Thyroid gland (tissue), 4 donors: ENCODE measurements at regions of chr14 and their contacts with region 1.

Region 1: DNA sequence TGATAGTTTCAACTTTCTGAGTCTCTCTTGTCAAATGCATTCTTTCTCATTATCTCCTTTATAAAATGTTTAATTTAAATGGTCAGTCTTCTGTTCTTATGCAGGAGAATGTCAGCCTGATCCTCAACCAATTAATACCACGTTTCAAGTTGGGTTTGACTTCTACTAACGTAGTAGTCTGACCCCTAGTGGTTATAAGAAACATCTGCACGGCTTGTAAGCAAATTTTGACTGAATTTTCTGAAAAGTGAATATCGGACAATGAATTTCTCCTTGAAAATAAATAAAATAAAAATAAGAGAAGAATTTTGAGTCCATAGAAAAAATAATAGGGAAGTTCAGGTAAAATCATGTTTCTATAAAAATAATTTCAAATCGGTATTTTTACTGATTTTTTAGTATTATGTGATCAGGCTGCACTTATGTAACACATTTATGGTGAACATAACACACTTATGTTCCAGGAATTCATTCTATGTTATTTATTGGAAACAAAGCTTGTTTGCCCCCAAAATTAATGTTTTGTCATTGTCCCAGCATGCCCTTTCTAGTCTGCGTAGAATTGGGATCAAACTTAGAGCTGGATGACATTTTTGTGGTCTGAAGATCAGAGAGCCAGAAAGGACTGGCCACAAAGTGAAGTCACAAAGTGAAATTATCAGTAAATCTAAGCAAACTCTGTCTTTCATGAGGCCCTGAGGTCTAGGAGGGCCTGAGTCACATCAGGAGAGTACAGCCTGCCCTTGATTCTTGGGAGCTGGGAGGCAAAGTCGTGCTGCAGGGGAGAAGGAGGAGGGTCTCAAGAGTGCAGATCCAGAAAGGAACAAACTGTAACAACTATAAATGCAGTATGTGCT is 101.2 kb upstream of the STXBP6 start:
- DNase-seq: no peak
- H3K4me3 ChIP-seq: no peak overlapping the region
- H3K27ac ChIP-seq: no peak overlapping the region
- H3K4me1 ChIP-seq: no peaks in the 10 kb centered on the region
- H3K27me3 ChIP-seq: no peaks in the 10 kb centered on the region
- CTCF ChIP-seq: peak; percentile 47 to 85 (median 81)
- POLR2A ChIP-seq: no peak

Region 2: DNA sequence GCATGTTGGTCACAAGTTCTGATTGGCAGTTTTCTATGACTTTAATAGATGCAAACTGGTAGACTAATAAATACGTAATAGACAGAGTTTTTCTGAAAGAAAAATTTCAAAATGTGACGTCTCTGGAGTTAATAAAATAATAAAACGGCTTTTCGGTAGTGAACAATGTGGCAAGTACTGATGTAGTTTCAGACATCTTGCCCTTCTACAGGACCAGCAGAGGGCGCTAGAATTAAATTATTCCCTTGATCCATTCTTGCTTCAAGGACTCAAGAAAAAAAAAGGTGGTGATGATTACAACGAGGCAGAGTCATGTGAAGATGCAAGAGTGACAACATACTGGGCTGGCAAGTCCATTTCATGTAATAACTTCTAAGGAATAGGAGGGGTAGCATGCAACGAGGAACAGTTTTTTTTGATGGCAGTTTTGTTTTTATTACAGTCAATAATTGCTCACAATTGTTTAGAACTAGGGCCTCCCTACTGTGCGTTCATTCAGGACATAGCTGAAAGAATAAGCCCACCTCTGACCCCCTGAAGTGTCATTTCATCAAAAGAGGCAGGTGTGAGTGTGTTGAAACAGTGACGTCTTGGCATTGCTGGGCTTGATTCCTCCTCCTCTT is 416.2 kb before region 1 on chr14:
- intact Hi-C with region 1: loop called (anchors 5 kb)
- DNase-seq: peak; percentile 38 to 50
- H3K4me3 ChIP-seq: no peak overlapping the region
- H3K27ac ChIP-seq: no peak overlapping the region
- H3K4me1 ChIP-seq: no peaks in the 10 kb centered on the region
- H3K27me3 ChIP-seq: no peaks in the 10 kb centered on the region
- CTCF ChIP-seq: peak; percentile 23 to 78 (median 70)
- POLR2A ChIP-seq: no peak

Region 3: DNA sequence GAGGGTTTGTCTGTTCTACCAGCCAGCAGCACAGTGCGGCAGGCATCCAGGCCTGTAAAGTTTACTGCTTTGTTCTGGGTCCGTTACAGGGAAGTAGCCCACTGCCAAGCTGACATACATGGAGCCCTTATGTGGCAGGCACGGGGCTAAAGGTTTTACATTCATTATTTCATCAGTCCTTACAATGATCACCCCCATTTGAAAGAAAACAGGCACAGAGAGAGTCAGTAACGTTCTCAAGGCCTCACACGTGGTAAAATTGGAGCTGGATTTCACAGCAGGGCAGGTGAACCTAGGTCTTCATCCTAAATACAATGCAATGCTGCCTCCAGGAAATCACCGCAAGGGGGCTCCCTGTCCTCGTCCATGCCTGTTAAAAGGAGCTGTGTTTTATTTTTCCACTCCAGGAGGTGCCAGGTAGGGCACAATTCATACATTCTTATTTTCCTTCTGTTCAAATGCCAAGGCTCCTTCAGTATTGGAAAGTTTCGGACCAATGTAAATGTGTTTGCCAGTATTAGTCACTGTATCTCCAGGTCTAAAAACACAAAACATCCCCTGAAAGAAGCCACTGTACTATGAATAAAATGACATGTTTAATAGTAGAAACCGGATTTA is 345.0 kb before region 1 on chr14:
- intact Hi-C with region 1: loop called (anchors 5 kb)
- DNase-seq: peak; percentile 82 to 86
- H3K4me3 ChIP-seq: no peak overlapping the region
- H3K27ac ChIP-seq: no peak overlapping the region
- H3K4me1 ChIP-seq: peaks cover 5 to 18% of the 10 kb centered on the region in 2 donors
- H3K27me3 ChIP-seq: no peaks in the 10 kb centered on the region
- CTCF ChIP-seq: peak; percentile 55 to 93 (median 82)
- POLR2A ChIP-seq: no peak